ENCODE measurements at regions of chr13 and their contacts with region 1.

Region 1: GRCh38 chr13:36346222-36347083 is at the start of gene SPART:
- DNase-seq: peak; percentile 85
- H3K4me3 Mint-ChIP-seq: peak within 1 kb of the TSS; percentile 92
- H3K27ac Mint-ChIP-seq: peak within 1 kb of the TSS; percentile 98
- H3K4me1 Mint-ChIP-seq: peaks cover 36% of the 10 kb centered on the region
- H3K27me3 Mint-ChIP-seq: peaks cover 10% of the 10 kb centered on the region
- total RNA-seq, gene SPART: 28.0 and 28.7 TPM in 2 replicates

Region 2: GRCh38 chr13:36297366-36298338 is 48.8 kb before region 1 on chr13 and contains the start of gene CCDC169:
- intact Hi-C with region 1: loop called (anchors 1 kb)
- DNase-seq: peak; percentile 61
- H3K4me3 Mint-ChIP-seq: peak within 1 kb of the TSS; percentile 87
- H3K27ac Mint-ChIP-seq: peak within 1 kb of the TSS; percentile 20
- H3K4me1 Mint-ChIP-seq: peaks cover 21% of the 10 kb centered on the region
- H3K27me3 Mint-ChIP-seq: peaks cover 25% of the 10 kb centered on the region
- total RNA-seq, gene CCDC169: 0.07 TPM in 1 of 2 replicates, not detected in the other

Region 3: GRCh38 chr13:36332986-36333385 is 13.5 kb before region 1 on chr13:
- intact Hi-C with region 1: no loop called
- DNase-seq: no peak
- H3K4me3 Mint-ChIP-seq: no peak overlapping the region
- H3K27ac Mint-ChIP-seq: no peak overlapping the region
- H3K4me1 Mint-ChIP-seq: peaks cover 25% of the 10 kb centered on the region
- H3K27me3 Mint-ChIP-seq: no peaks in the 10 kb centered on the region

Region 4: DNA sequence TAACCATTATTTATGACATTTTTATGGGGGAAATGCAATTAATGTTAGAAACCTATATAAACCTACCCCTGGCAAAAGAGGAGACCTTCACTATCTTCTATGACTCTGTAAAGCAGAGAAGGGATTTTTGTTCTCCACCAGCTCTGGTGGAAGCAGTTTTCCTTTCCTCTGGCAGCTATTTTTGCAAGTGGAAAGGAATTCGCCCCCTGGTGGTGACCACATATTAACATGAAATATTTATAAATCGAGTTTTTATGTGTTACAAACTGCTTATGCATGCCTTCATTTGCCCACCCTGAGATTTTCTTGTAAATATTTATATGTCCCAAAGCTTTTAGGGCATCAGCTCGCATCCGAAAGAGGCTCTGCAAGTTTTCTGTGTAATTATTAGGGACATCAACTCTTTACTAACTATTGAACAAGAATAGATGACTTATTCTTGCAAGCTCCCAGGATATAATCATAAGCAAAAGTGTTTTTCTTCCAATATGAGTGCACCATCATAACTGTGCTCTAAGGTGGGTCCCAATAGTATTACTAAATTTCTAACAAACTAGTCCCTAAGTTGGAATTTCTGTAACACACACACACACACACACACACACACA is 389.8 kb after region 1 on chr13:
- intact Hi-C with region 1: loop called (anchors 1 kb)
- DNase-seq: no peak
- H3K4me3 Mint-ChIP-seq: no peak overlapping the region
- H3K27ac Mint-ChIP-seq: no peak overlapping the region
- H3K4me1 Mint-ChIP-seq: no peaks in the 10 kb centered on the region
- H3K27me3 Mint-ChIP-seq: peaks cover 4% of the 10 kb centered on the region

Region 5: GRCh38 chr13:36999054-36999714 is 652.7 kb after region 1 on chr13 and contains the start of gene ALG5:
- intact Hi-C with region 1: loop called (anchors 1 kb)
- DNase-seq: peak; percentile 95
- H3K4me3 Mint-ChIP-seq: peak within 1 kb of the TSS; percentile 100
- H3K27ac Mint-ChIP-seq: peak within 1 kb of the TSS; percentile 100
- H3K4me1 Mint-ChIP-seq: peaks cover 37% of the 10 kb centered on the region
- H3K27me3 Mint-ChIP-seq: no peaks in the 10 kb centered on the region
- total RNA-seq, gene ALG5: 52.5 and 53.2 TPM in 2 replicates